CD8-positive, alpha-beta T cell (primary cell): ENCODE measurements at regions of chr11 and their contacts with region 1.

Region 1: GRCh38 chr11:56273854-56274253 is at the start of gene OR5T1:
- DNase-seq: no peak
- ATAC-seq: no peak
- H3K4me3 ChIP-seq: no peak within 1 kb of the TSS
- H3K4me3 Mint-ChIP-seq: no peak within 1 kb of the TSS
- H3K27ac ChIP-seq: no peak within 1 kb of the TSS
- H3K27ac Mint-ChIP-seq: no peak within 1 kb of the TSS
- H3K4me1 ChIP-seq: no peaks in the 10 kb centered on the region
- H3K4me1 Mint-ChIP-seq: no peaks in the 10 kb centered on the region
- H3K27me3 ChIP-seq: no peaks in the 10 kb centered on the region
- H3K27me3 Mint-ChIP-seq: no peaks in the 10 kb centered on the region
- CTCF ChIP-seq: no peak
- total RNA-seq, gene OR5T1: not detected

Region 2: DNA sequence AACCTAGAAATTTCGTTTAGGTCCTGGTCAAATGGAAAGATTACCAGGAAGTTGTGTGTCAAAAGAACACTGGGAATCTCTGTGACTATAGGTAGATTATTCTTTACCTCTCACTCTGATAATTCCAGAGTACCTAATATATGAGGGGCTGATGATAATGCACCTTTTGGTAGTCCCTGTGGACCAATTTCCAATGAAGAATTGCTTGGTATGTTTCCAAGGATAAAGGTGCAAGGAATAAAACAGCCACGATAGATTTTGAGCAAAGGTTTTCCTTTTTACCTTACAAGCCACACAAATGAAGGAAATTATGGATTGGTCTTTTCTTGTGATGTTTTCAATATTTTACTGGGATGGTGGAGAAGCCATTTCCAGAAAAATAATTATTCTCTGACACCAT is 18.3 kb after region 1 on chr11 and contains the start of gene OR8H1:
- CTCF ChIA-PET with region 1: no interaction called
- POLR2A ChIA-PET with region 1: no interaction called
- intact Hi-C with region 1: loop called in 1 of 2 experiments (anchors 1 kb)
- DNase-seq: no peak
- ATAC-seq: no peak
- H3K4me3 ChIP-seq: no peak within 1 kb of the TSS
- H3K4me3 Mint-ChIP-seq: no peak within 1 kb of the TSS
- H3K27ac ChIP-seq: no peak within 1 kb of the TSS
- H3K27ac Mint-ChIP-seq: no peak within 1 kb of the TSS
- H3K4me1 ChIP-seq: no peaks in the 10 kb centered on the region
- H3K4me1 Mint-ChIP-seq: no peaks in the 10 kb centered on the region
- H3K27me3 ChIP-seq: no peaks in the 10 kb centered on the region
- H3K27me3 Mint-ChIP-seq: no peaks in the 10 kb centered on the region
- CTCF ChIP-seq: no peak
- total RNA-seq, gene OR8H1: not detected